Mammary epithelial cell (primary cell): ENCODE measurements at regions of chr6 and their contacts with region 1.

Region 1: GRCh38 chr6:37691904-37692806 is 5.5 kb downstream of the MDGA1 start:
- DNase-seq: peak; percentile 70
- H3K4me3 ChIP-seq: no peak overlapping the region
- H3K27ac ChIP-seq: no peak overlapping the region
- H3K4me1 ChIP-seq: peaks cover 25% of the 10 kb centered on the region
- H3K27me3 ChIP-seq: no peaks in the 10 kb centered on the region
- CTCF ChIP-seq: peak; percentile 97 to 98

Region 2: GRCh38 chr6:37353761-37354525 is 338.2 kb before region 1 on chr6 and contains the start of gene RNF8:
- CTCF ChIA-PET with region 1: no interaction called
- dilution Hi-C with region 1: no loop called
- in situ Hi-C with region 1: loop called in 1 of 2 experiments (anchors 25 kb)
- intact Hi-C with region 1: no loop called
- DNase-seq: peak; percentile 80
- H3K4me3 ChIP-seq: peak within 1 kb of the TSS; percentile 78 to 95 (median 82)
- H3K27ac ChIP-seq: peak within 1 kb of the TSS; percentile 63
- H3K4me1 ChIP-seq: peaks cover 7% of the 10 kb centered on the region
- H3K27me3 ChIP-seq: no peaks in the 10 kb centered on the region
- CTCF ChIP-seq: no peak
- total RNA-seq, gene RNF8: 15.2 to 30.0 TPM

Region 3: DNA sequence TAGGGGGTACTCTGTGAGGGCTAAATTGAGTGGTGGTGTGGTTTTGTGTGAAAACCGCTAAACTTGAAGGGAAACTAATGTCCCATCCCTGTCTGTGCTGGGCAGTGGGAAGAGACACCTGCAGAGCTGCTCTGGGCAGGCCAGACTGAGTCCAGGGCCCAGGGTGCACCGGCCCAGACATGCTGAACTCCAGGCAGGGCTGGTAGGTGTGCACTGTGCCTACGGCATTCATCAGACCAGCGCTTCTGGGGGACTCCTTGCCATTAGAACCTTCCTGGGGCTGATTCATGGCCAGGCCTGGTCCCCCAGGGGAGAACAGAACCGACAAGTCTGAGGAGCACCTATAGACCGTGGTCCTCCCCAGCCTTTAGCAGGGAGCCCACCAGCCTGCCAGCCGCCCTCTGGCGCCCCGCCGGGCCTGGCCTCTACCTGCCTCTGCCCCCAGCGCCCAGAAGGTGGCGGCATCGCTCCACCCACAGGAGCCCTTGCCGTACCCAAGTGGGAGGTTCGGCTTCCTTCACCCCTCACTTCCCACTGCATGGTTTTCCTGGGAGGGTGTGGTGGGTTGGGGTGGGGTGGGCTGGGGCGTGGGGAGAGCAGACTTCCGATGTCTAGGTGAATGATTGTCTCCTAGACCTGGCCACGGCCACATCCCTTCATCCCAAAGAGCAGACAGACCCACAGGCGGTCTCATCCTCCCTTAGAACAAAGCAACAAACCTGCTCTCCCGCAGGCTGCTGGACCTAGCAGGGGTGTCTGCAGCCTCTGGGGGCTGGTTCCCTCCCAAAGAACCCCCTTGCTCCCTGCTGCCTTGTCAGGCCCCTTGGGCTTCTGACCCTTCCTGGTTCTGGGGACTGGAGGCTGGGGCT is 208.0 kb before region 1 on chr6:
- CTCF ChIA-PET with region 1: no interaction called
- dilution Hi-C with region 1: no loop called
- in situ Hi-C with region 1: loop called in 1 of 2 experiments (anchors 10 kb)
- intact Hi-C with region 1: loop called (anchors 1 kb)
- DNase-seq: peak; percentile 20
- H3K4me3 ChIP-seq: no peak overlapping the region
- H3K27ac ChIP-seq: no peak overlapping the region
- H3K4me1 ChIP-seq: no peaks in the 10 kb centered on the region
- H3K27me3 ChIP-seq: no peaks in the 10 kb centered on the region
- CTCF ChIP-seq: peak; percentile 81 to 87

Region 4: DNA sequence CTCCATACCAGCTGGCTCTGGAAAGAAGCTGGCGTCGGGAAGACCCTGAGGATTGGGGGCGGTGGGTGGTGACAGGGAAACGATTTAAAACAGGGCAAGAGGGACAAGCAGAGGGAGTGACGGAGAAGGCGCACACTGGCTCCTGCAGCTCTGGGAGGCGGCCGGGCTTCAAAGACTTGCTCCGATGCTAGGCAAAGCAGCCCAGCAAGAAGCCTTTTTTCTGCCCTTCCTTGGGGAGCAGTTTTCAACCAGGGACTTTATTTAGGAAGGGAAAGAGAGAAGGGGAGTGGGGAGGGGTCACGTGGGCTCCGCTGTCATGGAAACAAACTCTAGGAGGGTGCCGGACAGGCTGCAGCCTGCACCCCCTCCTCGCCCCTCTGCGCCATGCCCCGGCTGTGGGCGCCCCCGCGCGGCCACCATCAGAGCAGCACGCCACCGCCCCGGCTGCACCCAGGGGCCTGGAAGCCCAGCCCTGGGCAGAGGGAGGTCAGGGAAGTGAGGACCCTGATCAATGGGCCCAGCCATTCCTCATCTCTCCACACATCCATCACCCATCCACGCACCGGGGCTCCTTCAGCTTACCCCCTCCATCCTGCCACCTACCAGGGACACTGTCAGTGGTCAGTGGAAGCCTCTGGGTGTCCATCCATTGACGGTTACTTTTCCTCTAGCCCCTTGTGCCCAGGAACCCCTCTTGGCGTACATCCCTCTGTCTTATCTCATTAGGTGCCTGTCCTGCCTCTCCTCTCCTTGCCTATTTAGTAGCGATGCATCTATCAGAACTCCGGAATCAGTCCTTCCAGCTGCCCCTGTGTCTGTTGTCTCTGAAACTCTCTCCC is 125.8 kb before region 1 on chr6:
- CTCF ChIA-PET with region 1: no interaction called
- dilution Hi-C with region 1: no loop called
- in situ Hi-C with region 1: no loop called
- intact Hi-C with region 1: loop called (anchors 1 kb)
- DNase-seq: peak; percentile 13
- H3K4me3 ChIP-seq: peak overlapping the region in 2 of 3 experiments; percentile 28 to 29
- H3K27ac ChIP-seq: no peak overlapping the region
- H3K4me1 ChIP-seq: no peaks in the 10 kb centered on the region
- H3K27me3 ChIP-seq: peaks cover 3% of the 10 kb centered on the region
- CTCF ChIP-seq: peak; percentile 71 to 90

Region 5: DNA sequence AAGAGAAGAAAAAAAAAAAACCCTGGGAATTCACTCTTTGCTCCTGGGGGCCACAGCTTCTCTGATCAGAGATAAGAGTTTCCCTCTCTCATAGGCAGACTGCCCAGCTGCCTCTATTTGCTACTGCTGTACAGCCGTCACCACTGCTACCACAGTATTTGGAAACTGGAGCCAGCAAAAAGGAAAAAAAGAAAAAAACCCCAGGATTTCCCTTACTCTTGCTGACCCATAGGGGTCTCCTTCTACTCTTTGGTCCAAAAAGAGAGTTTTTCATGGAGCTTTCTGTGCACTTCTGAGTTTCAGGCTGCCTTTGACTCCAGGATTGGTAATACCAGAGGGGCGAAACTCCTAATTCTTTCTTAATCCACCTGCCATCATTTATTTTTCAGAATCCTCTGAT is 84.2 kb before region 1 on chr6:
- CTCF ChIA-PET with region 1: no interaction called
- dilution Hi-C with region 1: no loop called
- in situ Hi-C with region 1: no loop called
- intact Hi-C with region 1: loop called (anchors 1 kb)
- DNase-seq: no peak
- H3K4me3 ChIP-seq: no peak overlapping the region
- H3K27ac ChIP-seq: no peak overlapping the region
- H3K4me1 ChIP-seq: no peaks in the 10 kb centered on the region
- H3K27me3 ChIP-seq: no peaks in the 10 kb centered on the region
- CTCF ChIP-seq: peak; percentile 10 to 13